CD4-positive, alpha-beta memory T cell (primary cell): ENCODE measurements at regions of chr11 and their contacts with region 1.

Region 1: GRCh38 chr11:58685973-58686722 is 45.6 kb downstream of the GLYAT start:
- DNase-seq: peak in 2 of 5 donors; percentile 3 to 4
- H3K4me3 ChIP-seq: no peak overlapping the region
- H3K4me3 Mint-ChIP-seq: peak overlapping the region in 7 of 8 donors; percentile 2 to 65 (median 47)
- H3K27ac ChIP-seq: no peak overlapping the region
- H3K27ac Mint-ChIP-seq: peak overlapping the region in 1 of 7 donors; percentile 18
- H3K4me1 ChIP-seq: peaks cover 6% of the 10 kb centered on the region
- H3K4me1 Mint-ChIP-seq: peaks cover 0 to 6% (median 3%) of the 10 kb centered on the region in 4 donors
- H3K27me3 ChIP-seq: no peaks in the 10 kb centered on the region
- H3K27me3 Mint-ChIP-seq: peaks cover 5 to 9% of the 10 kb centered on the region in 2 donors

Region 2: GRCh38 chr11:58675334-58676155 is 10.6 kb before region 1 on chr11:
- CTCF ChIA-PET with region 1: interaction called, 10 read pairs
- POLR2A ChIA-PET with region 1: interaction called, 6 read pairs
- intact Hi-C with region 1: no loop called
- DNase-seq: peak; percentile 46 to 64 (median 58)
- H3K4me3 ChIP-seq: no peak overlapping the region
- H3K4me3 Mint-ChIP-seq: no peak overlapping the region
- H3K27ac ChIP-seq: no peak overlapping the region
- H3K27ac Mint-ChIP-seq: no peak overlapping the region
- H3K4me1 ChIP-seq: no peaks in the 10 kb centered on the region
- H3K4me1 Mint-ChIP-seq: no peaks in the 10 kb centered on the region
- H3K27me3 ChIP-seq: peaks cover 5% of the 10 kb centered on the region
- H3K27me3 Mint-ChIP-seq: peaks cover 0 to 4% of the 10 kb centered on the region in 2 donors

Region 3: GRCh38 chr11:58762284-58763119 is 76.4 kb after region 1 on chr11:
- CTCF ChIA-PET with region 1: no interaction called
- POLR2A ChIA-PET with region 1: no interaction called
- intact Hi-C with region 1: no loop called
- DNase-seq: no peak
- H3K4me3 ChIP-seq: no peak overlapping the region
- H3K4me3 Mint-ChIP-seq: no peak overlapping the region
- H3K27ac ChIP-seq: no peak overlapping the region
- H3K27ac Mint-ChIP-seq: no peak overlapping the region
- H3K4me1 ChIP-seq: no peaks in the 10 kb centered on the region
- H3K4me1 Mint-ChIP-seq: no peaks in the 10 kb centered on the region
- H3K27me3 ChIP-seq: no peaks in the 10 kb centered on the region
- H3K27me3 Mint-ChIP-seq: peaks cover 11 to 13% of the 10 kb centered on the region in 2 donors